Motor neuron (in vitro differentiated cells): ENCODE measurements at regions of chr2 and their contacts with region 1.

Region 1: GRCh38 chr2:182949572-182950189 is 83.2 kb upstream of the FRZB start:
- ATAC-seq: peak in 7 of 8 experiments; percentile 35 to 100 (median 96)
- H3K4me3 ChIP-seq: no peak overlapping the region
- H3K27ac ChIP-seq: peak overlapping the region in 1 of 2 donors; percentile 36
- H3K4me1 ChIP-seq: peaks cover 0 to 2% of the 10 kb centered on the region in 2 donors

Region 2: DNA sequence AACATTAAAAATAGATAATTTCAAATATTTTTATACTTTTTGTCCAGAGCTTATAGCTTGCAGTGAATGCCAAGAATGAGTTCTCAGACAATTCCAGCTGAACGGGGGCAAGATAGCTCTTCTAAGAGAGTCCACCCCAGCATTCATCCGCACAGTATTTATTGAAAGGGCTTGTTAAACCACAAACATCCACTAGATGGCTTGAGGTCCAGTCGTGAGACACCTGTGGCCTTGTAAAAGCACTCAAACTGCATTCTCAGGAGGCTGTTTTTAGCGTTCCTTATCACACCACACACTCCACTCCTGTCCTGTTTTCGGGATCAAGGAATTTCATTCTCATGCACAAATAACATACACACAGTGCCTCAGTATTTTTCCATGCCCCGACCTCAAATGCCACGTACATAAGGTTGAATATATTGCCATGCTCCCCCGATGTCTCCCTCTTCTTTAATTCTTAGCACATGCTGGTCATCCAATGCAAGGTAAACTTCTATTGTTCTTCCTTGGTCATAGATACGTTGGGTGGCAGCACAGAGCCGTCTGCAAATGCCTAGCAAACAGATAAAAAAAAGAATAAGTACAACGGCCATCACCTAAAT is 186.3 kb before region 1 on chr2:
- in situ Hi-C with region 1: loop called in 1 of 9 experiments (anchors 25 kb)
- ATAC-seq: peak in 4 of 8 experiments; percentile 25 to 59 (median 48)
- H3K4me3 ChIP-seq: no peak overlapping the region
- H3K27ac ChIP-seq: no peak overlapping the region
- H3K4me1 ChIP-seq: no peaks in the 10 kb centered on the region

Region 3: GRCh38 chr2:182784777-182785176 is 164.9 kb before region 1 on chr2:
- in situ Hi-C with region 1: loop called in 1 of 9 experiments (anchors 25 kb)
- ATAC-seq: peak in 5 of 8 experiments; percentile 48 to 57 (median 52)
- H3K4me3 ChIP-seq: no peak overlapping the region
- H3K27ac ChIP-seq: no peak overlapping the region
- H3K4me1 ChIP-seq: no peaks in the 10 kb centered on the region